Esophagus squamous epithelium (tissue), 5 donors: ENCODE measurements at regions of chrX and their contacts with region 1.

Region 1: DNA sequence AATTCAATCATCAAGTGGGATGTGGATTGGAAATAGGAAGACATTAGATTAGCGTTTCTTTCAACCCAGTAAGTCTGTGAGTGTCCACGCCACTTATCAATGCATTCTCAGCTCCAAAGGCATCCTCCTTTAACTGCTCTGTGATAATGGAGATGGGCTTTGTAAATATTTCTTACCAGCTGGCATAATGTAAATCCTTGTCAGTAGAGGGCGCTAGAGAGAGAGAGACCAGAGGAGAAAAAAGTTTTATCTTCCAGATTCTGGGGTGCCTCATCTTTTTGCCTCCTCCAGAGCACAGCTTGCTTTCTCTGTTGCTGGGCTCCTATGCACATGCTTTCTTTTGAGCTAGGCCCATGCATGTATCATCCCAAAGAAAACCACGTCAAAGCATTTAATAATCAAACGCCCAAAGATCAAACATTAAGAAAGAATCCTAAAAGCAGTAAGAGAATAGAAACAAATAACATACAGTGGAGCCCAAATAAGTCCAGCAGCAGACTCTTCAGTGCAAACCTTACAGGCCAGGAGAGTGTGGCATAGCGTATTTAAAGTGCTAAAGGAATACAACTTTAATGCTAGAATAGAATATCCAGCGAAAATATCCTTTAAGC is 9.6 kb upstream of the MTMR1 start:
- DNase-seq: no peak
- H3K4me3 ChIP-seq: no peak overlapping the region
- H3K27ac ChIP-seq: no peak overlapping the region
- H3K4me1 ChIP-seq: no peaks in the 10 kb centered on the region
- H3K27me3 ChIP-seq: no peaks in the 10 kb centered on the region
- CTCF ChIP-seq: peak in 4 of 6 experiments; percentile 43 to 59 (median 52)
- POLR2A ChIP-seq: no peak

Region 2: DNA sequence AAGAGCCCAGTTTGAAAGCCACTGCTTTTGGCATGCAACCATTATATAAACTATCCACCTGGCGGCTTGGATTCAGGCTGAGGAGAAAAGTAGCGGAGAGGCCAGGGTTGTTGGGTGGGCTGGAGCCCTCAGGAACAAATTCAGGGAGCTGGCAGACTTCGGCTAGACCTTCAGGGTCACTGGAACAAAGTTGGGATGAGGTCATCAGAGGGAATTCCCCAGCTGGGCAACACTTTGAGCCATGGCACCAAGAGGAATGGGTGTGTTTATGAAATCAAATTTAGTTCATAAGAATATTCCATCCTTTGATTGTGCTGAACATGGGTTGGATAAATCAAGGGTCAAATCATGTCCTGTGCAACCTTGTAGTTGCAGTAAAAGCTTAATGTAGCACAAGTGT is 31.5 kb after region 1 on chrX:
- intact Hi-C with region 1: loop called (anchors 5 kb)
- DNase-seq: no peak
- H3K4me3 ChIP-seq: no peak overlapping the region
- H3K27ac ChIP-seq: no peak overlapping the region
- H3K4me1 ChIP-seq: peaks cover 0 to 7% (median 0%) of the 10 kb centered on the region in 3 donors
- H3K27me3 ChIP-seq: no peaks in the 10 kb centered on the region
- CTCF ChIP-seq: no peak
- POLR2A ChIP-seq: no peak

Region 3: DNA sequence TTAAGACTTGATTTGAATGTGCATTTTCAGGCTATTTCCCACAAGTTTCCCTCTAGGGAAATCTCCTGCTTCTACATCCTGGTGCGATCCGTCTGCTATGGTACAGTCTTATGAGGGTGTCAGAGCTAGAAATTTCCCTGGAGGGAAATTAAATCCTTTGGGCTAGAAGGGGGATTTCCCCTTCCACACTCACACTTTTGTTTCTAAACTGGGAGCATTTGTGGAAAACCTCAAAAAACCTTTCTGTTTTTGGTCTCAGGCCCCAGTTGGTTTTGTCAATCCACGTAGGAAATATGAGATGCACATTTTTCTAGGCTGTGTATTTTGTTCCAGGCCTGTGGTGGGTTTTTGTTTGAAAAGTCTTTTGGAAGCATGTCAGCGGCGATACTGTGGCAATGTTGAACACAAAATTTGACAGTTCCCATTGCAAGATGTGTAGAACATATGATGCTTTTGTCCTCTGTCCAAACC is 317.3 kb after region 1 on chrX:
- intact Hi-C with region 1: no loop called
- DNase-seq: no peak
- H3K4me3 ChIP-seq: no peak overlapping the region
- H3K27ac ChIP-seq: no peak overlapping the region
- H3K4me1 ChIP-seq: no peaks in the 10 kb centered on the region
- H3K27me3 ChIP-seq: no peaks in the 10 kb centered on the region
- CTCF ChIP-seq: no peak
- POLR2A ChIP-seq: no peak